Activated B cell treated with CpG ODN at 0.5 μM for 24 hours (primary cell): ENCODE measurements at regions of chr11 and their contacts with region 1.

Region 1: GRCh38 chr11:27472398-27473016 is at the start of gene LGR4:
- DNase-seq: peak; percentile 51
- ATAC-seq: peak; percentile 87
- H3K4me3 Mint-ChIP-seq: peak within 1 kb of the TSS; percentile 91
- H3K27ac Mint-ChIP-seq: peak within 1 kb of the TSS; percentile 75
- H3K4me1 Mint-ChIP-seq: peaks cover 32% of the 10 kb centered on the region
- H3K27me3 Mint-ChIP-seq: peaks cover 11% of the 10 kb centered on the region
- CTCF ChIP-seq: no peak
- total RNA-seq, gene LGR4: 2.4 and 3.0 TPM in 2 replicates

Region 2: GRCh38 chr11:27296497-27296896 is 176.0 kb before region 1 on chr11:
- CTCF ChIA-PET with region 1: no interaction called
- POLR2A ChIA-PET with region 1: no interaction called
- intact Hi-C with region 1: no loop called
- DNase-seq: no peak
- ATAC-seq: peak; percentile 54
- H3K4me3 Mint-ChIP-seq: no peak overlapping the region
- H3K27ac Mint-ChIP-seq: no peak overlapping the region
- H3K4me1 Mint-ChIP-seq: no peaks in the 10 kb centered on the region
- H3K27me3 Mint-ChIP-seq: peaks cover 3% of the 10 kb centered on the region
- CTCF ChIP-seq: no peak

Region 3: DNA sequence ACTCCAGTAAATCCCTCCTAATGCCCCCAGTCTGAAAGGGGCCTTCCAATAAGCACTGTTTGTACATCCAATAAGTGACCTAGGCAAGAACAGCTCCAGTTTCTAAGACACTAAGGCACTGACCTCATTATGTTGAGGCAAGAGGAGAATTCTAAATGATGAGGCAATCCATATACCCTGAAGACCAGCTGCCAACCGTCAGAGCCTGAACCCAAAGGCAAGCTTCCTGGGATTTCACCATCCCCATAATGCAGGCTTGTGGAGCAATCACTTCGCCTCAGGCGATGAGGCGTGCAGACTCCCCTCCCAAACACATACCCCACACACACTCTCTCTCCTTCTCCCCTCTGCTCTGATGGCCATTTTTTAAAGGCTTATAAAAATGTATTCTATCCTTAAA is 49.4 kb before region 1 on chr11:
- CTCF ChIA-PET with region 1: no interaction called
- POLR2A ChIA-PET with region 1: no interaction called
- intact Hi-C with region 1: no loop called
- DNase-seq: no peak
- ATAC-seq: no peak
- H3K4me3 Mint-ChIP-seq: no peak overlapping the region
- H3K27ac Mint-ChIP-seq: no peak overlapping the region
- H3K4me1 Mint-ChIP-seq: no peaks in the 10 kb centered on the region
- H3K27me3 Mint-ChIP-seq: no peaks in the 10 kb centered on the region
- CTCF ChIP-seq: no peak

Region 4: DNA sequence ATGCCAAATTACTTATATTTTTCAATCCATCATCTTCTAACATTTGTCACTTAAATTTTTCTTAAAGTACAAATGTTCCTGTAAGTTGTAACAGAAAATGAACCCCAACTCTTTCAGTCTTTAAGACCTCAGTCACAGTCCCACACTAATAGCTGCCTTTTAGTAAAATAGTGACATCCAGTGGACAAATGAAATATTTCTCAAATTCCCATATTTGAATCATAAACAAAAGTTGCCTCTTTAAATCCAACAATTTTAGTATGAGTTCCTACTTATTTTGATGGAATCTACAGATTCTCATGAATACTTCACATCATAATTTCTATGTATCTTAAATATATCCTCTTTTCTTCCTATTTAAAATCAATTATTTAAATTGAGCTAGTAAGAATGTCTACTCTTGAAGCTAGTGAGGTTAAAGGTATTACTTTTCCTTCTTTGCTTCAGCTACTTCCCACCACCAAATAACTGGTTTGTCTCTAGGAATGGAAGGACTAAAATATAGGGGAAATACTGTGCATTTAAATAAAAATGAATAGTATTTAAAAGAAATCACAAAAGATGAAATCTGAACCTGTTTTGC is 24.9 kb after region 1 on chr11:
- CTCF ChIA-PET with region 1: interaction called, 4 read pairs
- POLR2A ChIA-PET with region 1: interaction called, 3 read pairs
- intact Hi-C with region 1: loop called (anchors 2 kb)
- DNase-seq: no peak
- ATAC-seq: peak; percentile 47
- H3K4me3 Mint-ChIP-seq: no peak overlapping the region
- H3K27ac Mint-ChIP-seq: no peak overlapping the region
- H3K4me1 Mint-ChIP-seq: peaks cover 3% of the 10 kb centered on the region
- H3K27me3 Mint-ChIP-seq: no peaks in the 10 kb centered on the region
- CTCF ChIP-seq: no peak

Region 5: GRCh38 chr11:27506200-27507182 is 34.0 kb after region 1 on chr11 and contains the start of gene LIN7C:
- CTCF ChIA-PET with region 1: interaction called, 3 read pairs
- POLR2A ChIA-PET with region 1: interaction called, 16 read pairs
- intact Hi-C with region 1: loop called (anchors 1 kb)
- DNase-seq: peak; percentile 72
- ATAC-seq: peak; percentile 93
- H3K4me3 Mint-ChIP-seq: peak within 1 kb of the TSS; percentile 100
- H3K27ac Mint-ChIP-seq: peak within 1 kb of the TSS; percentile 98
- H3K4me1 Mint-ChIP-seq: peaks cover 45% of the 10 kb centered on the region
- H3K27me3 Mint-ChIP-seq: no peaks in the 10 kb centered on the region
- CTCF ChIP-seq: no peak
- total RNA-seq, gene LIN7C: 20.8 and 23.5 TPM in 2 replicates

Region 6: GRCh38 chr11:27563201-27563600 is 90.7 kb after region 1 on chr11:
- CTCF ChIA-PET with region 1: no interaction called
- POLR2A ChIA-PET with region 1: no interaction called
- intact Hi-C with region 1: no loop called
- DNase-seq: no peak
- ATAC-seq: no peak
- H3K4me3 Mint-ChIP-seq: no peak overlapping the region
- H3K27ac Mint-ChIP-seq: no peak overlapping the region
- H3K4me1 Mint-ChIP-seq: no peaks in the 10 kb centered on the region
- H3K27me3 Mint-ChIP-seq: no peaks in the 10 kb centered on the region
- CTCF ChIP-seq: no peak